ENCODE measurements at regions of chr6 and their contacts with region 1.

Region 1: GRCh38 chr6:16380220-16380809 is 141.9 kb downstream of the GMPR start:
- DNase-seq: no peak
- H3K4me3 ChIP-seq: no peak overlapping the region
- CTCF ChIP-seq: no peak
- POLR2A ChIP-seq: no peak

Region 2: DNA sequence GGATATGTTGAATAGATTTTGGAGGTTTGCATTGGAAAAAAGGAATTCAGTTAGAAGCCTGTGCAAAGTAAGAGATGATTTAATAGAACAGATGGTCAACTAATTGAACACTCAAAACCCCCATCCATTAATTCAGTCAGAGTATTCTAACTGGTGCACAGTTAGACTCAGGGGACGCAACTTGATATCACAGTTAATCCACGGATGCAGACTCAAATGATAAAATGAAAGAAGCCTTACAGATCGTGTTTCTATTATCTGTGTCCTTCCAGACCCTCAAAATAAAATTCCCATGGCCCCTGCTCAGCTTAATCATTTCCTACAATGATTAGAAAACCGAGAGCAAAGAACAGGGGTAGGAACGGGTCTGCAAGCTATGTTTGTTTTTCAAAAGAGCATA is 672.1 kb before region 1 on chr6:
- intact Hi-C with region 1: loop called (anchors 10 kb)
- DNase-seq: no peak
- H3K4me3 ChIP-seq: no peak overlapping the region
- CTCF ChIP-seq: no peak
- POLR2A ChIP-seq: no peak

Measured in lower leg skin (tissue), 4 donors.